Caco-2 (cell line): ENCODE measurements at regions of chr11 and their contacts with region 1.

Region 1: GRCh38 chr11:17384002-17384511 is 4.4 kb downstream of the KCNJ11 start:
- DNase-seq: peak; percentile 77 to 82
- H3K4me3 ChIP-seq: no peak overlapping the region
- H3K4me3 Mint-ChIP-seq: no peak overlapping the region
- H3K27ac Mint-ChIP-seq: no peak overlapping the region
- H3K4me1 ChIP-seq: no peaks in the 10 kb centered on the region
- H3K4me1 Mint-ChIP-seq: no peaks in the 10 kb centered on the region
- H3K27me3 ChIP-seq: no peaks in the 10 kb centered on the region; the same call in 1 of the 2 replicates
- H3K27me3 Mint-ChIP-seq: no peaks in the 10 kb centered on the region
- CTCF ChIP-seq: peak; percentile 89 to 93

Region 2: GRCh38 chr11:16977136-16977988 is 406.7 kb before region 1 on chr11:
- CTCF ChIA-PET with region 1: no interaction called
- POLR2A ChIA-PET with region 1: no interaction called
- intact Hi-C with region 1: no loop called
- DNase-seq: no peak
- H3K4me3 ChIP-seq: no peak overlapping the region
- H3K4me3 Mint-ChIP-seq: no peak overlapping the region
- H3K27ac Mint-ChIP-seq: no peak overlapping the region
- H3K4me1 ChIP-seq: peaks cover 5% of the 10 kb centered on the region; the same call in 1 of the 2 replicates
- H3K4me1 Mint-ChIP-seq: peaks cover 19% of the 10 kb centered on the region
- H3K27me3 ChIP-seq: no peaks in the 10 kb centered on the region
- H3K27me3 Mint-ChIP-seq: no peaks in the 10 kb centered on the region
- CTCF ChIP-seq: no peak

Region 3: GRCh38 chr11:17230867-17231851 is 152.9 kb before region 1 on chr11:
- CTCF ChIA-PET with region 1: interaction called, 4 read pairs
- POLR2A ChIA-PET with region 1: no interaction called
- intact Hi-C with region 1: loop called (anchors 1 kb)
- DNase-seq: no peak
- H3K4me3 ChIP-seq: no peak overlapping the region
- H3K4me3 Mint-ChIP-seq: no peak overlapping the region
- H3K27ac Mint-ChIP-seq: no peak overlapping the region
- H3K4me1 ChIP-seq: no peaks in the 10 kb centered on the region
- H3K4me1 Mint-ChIP-seq: peaks cover 6% of the 10 kb centered on the region
- H3K27me3 ChIP-seq: no peaks in the 10 kb centered on the region
- H3K27me3 Mint-ChIP-seq: no peaks in the 10 kb centered on the region
- CTCF ChIP-seq: no peak

Region 4: GRCh38 chr11:17352950-17353820 is 30.9 kb before region 1 on chr11:
- CTCF ChIA-PET with region 1: interaction called, 6 read pairs
- POLR2A ChIA-PET with region 1: interaction called, 10 read pairs
- intact Hi-C with region 1: loop called (anchors 1 kb)
- DNase-seq: peak; percentile 87 to 91
- H3K4me3 ChIP-seq: peak overlapping the region; percentile 61
- H3K4me3 Mint-ChIP-seq: peak overlapping the region; percentile 91
- H3K27ac Mint-ChIP-seq: peak overlapping the region; percentile 72
- H3K4me1 ChIP-seq: peaks cover 4% of the 10 kb centered on the region
- H3K4me1 Mint-ChIP-seq: peaks cover 14% of the 10 kb centered on the region
- H3K27me3 ChIP-seq: no peaks in the 10 kb centered on the region
- H3K27me3 Mint-ChIP-seq: no peaks in the 10 kb centered on the region
- CTCF ChIP-seq: no peak

Region 5: DNA sequence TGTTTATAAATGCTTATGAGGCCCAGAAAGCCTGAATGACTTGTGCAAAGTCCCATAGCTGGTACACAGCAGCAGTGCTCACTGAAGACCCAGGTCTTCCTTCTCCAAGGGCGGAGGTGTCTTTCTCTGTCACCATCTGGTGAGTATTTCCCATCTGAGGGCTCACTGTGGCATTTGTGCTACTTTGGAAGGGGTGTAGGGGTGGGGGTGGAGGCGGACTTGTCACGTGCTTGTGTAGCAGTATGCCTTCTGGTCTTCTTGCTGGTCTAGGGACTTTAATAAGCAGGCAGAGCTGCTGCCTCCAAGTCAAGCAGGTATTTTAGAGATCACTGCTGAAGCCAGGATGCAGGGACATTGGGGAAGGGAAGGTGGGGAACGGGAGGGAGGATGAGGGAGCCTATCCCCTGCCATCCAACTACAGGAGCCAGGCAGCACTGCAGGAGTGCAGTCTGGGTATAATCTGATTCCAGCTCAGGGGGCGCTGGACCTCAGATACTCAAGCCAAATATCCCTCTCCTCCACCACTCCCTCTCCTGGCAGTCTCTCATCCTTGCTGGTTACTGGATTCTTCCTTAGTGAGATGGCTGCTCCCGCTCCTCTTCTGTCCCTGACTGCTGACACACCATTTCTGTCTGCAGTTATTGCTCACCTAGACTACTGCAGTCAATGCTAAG is 89.2 kb after region 1 on chr11:
- CTCF ChIA-PET with region 1: interaction called, 26 read pairs
- POLR2A ChIA-PET with region 1: no interaction called
- intact Hi-C with region 1: loop called (anchors 1 kb)
- DNase-seq: peak; percentile 70 to 77
- H3K4me3 ChIP-seq: no peak overlapping the region
- H3K4me3 Mint-ChIP-seq: no peak overlapping the region
- H3K27ac Mint-ChIP-seq: no peak overlapping the region
- H3K4me1 ChIP-seq: 0 out of 2 replicates have a peak, but pooled peaks cover 3% of the 10 kb centered on the region
- H3K4me1 Mint-ChIP-seq: no peaks in the 10 kb centered on the region
- H3K27me3 ChIP-seq: peaks cover 8% of the 10 kb centered on the region
- H3K27me3 Mint-ChIP-seq: peaks cover 26% of the 10 kb centered on the region
- CTCF ChIP-seq: peak; percentile 78 to 96

Region 6: DNA sequence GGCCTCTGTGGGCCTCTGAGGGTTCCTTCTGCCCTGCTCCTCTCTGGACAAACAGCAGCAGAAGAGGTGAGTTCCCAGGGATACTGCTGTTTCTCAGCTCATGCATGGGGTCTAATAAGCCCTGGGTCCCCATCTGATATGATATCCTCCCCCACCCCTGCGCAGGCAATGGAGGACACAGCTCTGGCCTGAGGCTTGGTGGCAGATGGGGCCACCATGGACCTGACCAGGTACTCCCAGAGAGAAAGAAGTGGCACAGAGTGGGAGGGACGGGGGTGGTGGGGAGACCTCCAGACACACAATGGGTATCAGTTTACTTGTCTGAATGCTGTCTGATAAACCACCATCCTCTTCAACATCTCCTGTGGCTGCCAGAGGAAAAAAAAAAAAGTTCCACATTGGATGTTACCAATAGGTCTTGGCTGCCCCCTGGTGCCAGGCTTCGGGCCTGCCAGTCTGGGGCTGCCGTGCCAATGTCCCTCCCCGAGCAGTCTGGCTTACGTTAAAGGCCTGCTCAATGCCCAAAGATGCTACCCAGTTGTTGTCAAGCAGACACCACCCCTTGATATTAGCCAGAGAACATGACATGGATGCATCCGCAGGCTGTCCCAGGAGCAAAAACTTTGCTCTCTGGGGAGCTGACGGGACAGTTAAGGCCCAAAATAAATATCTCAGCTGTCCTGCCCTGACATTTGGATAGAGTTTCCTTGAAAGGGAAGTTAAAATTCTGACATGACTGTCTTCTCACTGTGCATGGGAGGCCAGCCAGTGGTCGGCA is 120.5 kb after region 1 on chr11:
- CTCF ChIA-PET with region 1: interaction called, 4 read pairs
- POLR2A ChIA-PET with region 1: no interaction called
- intact Hi-C with region 1: loop called (anchors 1 kb)
- DNase-seq: peak in 1 of 2 experiments; percentile 81
- H3K4me3 ChIP-seq: no peak overlapping the region
- H3K4me3 Mint-ChIP-seq: no peak overlapping the region
- H3K27ac Mint-ChIP-seq: no peak overlapping the region
- H3K4me1 ChIP-seq: no peaks in the 10 kb centered on the region
- H3K4me1 Mint-ChIP-seq: no peaks in the 10 kb centered on the region
- H3K27me3 ChIP-seq: no peaks in the 10 kb centered on the region
- H3K27me3 Mint-ChIP-seq: no peaks in the 10 kb centered on the region
- CTCF ChIP-seq: peak; percentile 61 to 73

Region 7: DNA sequence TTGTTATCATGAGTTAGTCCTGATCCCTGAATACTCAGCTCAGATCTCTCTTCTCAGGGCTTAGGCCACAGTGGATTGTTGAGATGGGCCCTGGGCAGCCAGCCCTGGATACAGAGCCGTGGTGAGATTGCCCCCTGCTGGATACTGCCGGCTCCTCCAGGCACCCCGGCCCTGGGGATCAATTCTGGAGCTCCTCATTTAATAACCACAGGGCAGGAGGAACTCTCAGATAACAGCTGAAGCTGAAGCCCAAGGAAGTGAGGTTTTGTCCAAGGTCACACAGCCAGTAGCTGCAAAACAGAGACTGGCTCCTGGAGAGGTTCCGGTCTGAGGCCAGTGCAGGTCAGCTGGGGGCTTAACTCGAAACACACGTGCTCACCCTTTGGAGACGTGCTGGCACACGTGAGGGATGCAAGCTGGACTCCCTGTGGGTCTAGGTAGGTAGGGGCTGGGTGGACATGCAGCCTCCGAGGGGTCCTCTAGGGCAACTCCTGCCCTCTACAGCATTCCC is 144.2 kb after region 1 on chr11:
- CTCF ChIA-PET with region 1: interaction called, 15 read pairs
- POLR2A ChIA-PET with region 1: no interaction called
- intact Hi-C with region 1: loop called (anchors 1 kb)
- DNase-seq: peak in 1 of 2 experiments; percentile 69
- H3K4me3 ChIP-seq: no peak overlapping the region
- H3K4me3 Mint-ChIP-seq: no peak overlapping the region
- H3K27ac Mint-ChIP-seq: peak overlapping the region; percentile 39
- H3K4me1 ChIP-seq: peaks cover 33% of the 10 kb centered on the region
- H3K4me1 Mint-ChIP-seq: peaks cover 17% of the 10 kb centered on the region
- H3K27me3 ChIP-seq: no peaks in the 10 kb centered on the region
- H3K27me3 Mint-ChIP-seq: no peaks in the 10 kb centered on the region
- CTCF ChIP-seq: peak; percentile 55 to 78

Region 8: DNA sequence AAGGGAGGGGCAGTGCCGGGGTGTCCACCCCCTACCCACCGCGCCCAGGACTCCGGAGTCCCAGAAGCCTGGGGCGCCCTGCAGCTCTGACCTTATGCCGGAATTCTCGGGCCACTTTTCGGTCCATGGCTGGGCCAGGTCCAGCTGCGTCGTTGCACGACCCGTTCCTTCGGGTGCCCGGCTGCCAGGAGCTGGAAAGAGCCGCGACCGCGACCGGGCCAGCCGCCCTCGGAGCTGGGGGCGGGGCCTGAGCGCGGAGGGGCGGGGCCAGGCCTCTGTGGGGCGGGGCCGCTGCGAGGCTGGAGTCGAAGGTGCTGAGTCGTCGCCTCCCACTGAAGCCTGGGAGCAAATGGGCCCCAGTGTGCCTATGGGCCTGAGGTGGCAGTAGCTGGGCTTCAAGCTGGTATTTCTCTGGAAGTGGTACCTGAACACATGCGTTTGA is 160.1 kb after region 1 on chr11 and contains the start of gene USH1C:
- CTCF ChIA-PET with region 1: interaction called, 8 read pairs
- POLR2A ChIA-PET with region 1: no interaction called
- intact Hi-C with region 1: loop called (anchors 1 kb)
- DNase-seq: peak; percentile 83 to 91
- H3K4me3 ChIP-seq: peak within 1 kb of the TSS; percentile 84
- H3K4me3 Mint-ChIP-seq: peak within 1 kb of the TSS; percentile 72
- H3K27ac Mint-ChIP-seq: peak within 1 kb of the TSS; percentile 80
- H3K4me1 ChIP-seq: peaks cover 46% of the 10 kb centered on the region
- H3K4me1 Mint-ChIP-seq: peaks cover 57% of the 10 kb centered on the region
- H3K27me3 ChIP-seq: no peaks in the 10 kb centered on the region
- H3K27me3 Mint-ChIP-seq: no peaks in the 10 kb centered on the region
- CTCF ChIP-seq: no peak
- total RNA-seq, gene USH1C: 101 and 113 TPM in 2 replicates